ENCODE measurements at regions of chr7 and their contacts with region 1.

Region 1: DNA sequence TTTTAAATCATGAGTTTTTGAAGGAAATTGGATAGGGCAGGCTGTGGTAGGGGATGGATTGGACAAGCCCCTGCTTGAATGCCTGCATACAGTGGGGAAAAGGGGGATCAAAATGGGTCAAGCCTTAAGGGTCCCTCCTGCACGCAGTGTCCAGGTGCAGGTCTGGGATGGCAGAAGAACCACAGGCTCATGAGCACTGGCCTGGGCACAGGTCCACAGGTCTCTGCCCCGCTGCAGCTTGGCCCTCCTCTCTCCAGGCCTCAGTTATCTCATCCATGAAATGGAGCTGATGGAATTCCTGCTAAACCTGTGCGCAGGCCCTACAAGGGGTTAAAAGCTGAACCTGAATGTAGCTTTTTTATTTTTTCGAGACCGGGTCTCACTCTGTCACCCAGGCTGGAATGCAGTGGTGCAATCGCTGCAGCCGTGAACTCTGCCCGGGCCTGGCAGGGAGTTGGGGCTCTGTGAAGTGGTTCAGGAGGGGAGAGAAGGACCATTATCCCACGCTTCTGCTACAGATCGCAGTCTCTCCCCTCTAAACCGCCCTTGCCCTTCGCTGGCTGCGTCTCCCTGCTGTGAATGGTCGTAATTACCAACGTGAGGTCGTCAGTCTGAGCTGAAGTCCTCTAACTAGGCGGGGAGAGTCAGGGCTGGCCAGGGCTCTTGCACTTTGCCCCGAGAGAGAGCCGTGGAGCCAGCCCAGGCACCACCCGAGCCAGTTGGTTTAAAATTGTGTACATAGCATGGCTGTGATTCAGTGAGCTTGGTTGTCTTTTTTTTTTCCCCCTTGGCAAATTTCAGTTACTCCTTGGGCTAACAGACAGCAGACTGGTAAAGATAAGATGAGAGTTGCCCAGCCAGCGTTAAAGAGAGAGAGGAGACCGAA is 77.5 kb upstream of the GTF2I start:
- DNase-seq: peak; percentile 85
- H3K4me3 ChIP-seq: no peak overlapping the region
- H3K27ac ChIP-seq: peak overlapping the region; percentile 78 to 82 (median 78)
- H3K4me1 ChIP-seq: peaks cover 10 to 46% (median 27%) of the 10 kb centered on the region in 4 donors
- H3K27me3 ChIP-seq: no peaks in the 10 kb centered on the region
- CTCF ChIP-seq: no peak
- EP300 ChIP-seq: no peak
- POLR2A ChIP-seq: peak; percentile 55

Region 2: DNA sequence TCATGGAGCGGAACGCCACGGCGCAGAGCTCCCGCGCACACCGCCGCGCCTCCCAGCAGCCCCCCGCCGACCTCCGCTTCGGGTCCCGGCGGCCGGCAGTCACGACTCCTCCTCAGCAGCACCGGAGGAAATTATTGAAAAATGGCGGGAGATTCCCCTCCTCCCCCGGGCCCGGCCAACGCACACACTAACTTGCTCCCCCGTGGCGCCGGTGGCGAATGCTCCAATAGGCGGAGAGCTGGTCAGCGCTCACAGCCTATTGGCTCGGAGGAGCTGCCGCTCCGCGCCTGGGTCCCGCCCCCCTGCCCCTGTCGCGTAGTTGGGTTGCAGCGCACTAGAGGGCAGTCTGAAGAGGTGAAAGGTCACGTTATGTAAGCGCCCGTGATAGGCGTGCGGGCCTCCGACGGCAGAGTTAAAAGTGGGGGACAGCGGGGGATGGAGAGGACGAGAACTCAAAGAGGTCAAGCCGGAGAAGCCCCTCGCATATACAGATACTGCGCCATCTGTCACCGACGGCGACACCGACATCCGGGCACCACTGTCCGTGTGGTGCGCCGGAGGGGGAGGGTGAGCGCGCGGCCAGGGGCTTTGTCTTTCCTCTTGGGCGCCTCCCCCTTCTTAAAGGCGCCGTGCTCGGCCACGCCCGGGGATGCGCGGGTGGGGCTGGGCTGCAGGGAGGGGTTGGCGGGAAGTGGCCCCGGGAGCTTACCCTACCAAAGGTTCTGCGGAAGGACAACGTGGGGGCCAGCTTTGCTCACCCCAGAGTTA is 1057.8 kb before region 1 on chr7 and contains the start of gene BAZ1B:
- in situ Hi-C with region 1: no loop called
- intact Hi-C with region 1: loop called (anchors 5 kb)
- DNase-seq: peak; percentile 98
- H3K4me3 ChIP-seq: peak within 1 kb of the TSS; percentile 81 to 91 (median 87)
- H3K27ac ChIP-seq: peak within 1 kb of the TSS; percentile 91 to 97 (median 97)
- H3K4me1 ChIP-seq: peaks cover 10 to 51% (median 30%) of the 10 kb centered on the region in 4 donors
- H3K27me3 ChIP-seq: no peaks in the 10 kb centered on the region
- CTCF ChIP-seq: peak in 4 of 5 experiments; percentile 17 to 56 (median 30)
- EP300 ChIP-seq: no peak
- POLR2A ChIP-seq: peak; percentile 60
- total RNA-seq, gene BAZ1B: 28.7 to 48.0 (median 33.7) TPM

Region 3: GRCh38 chr7:73960548-73960947 is 619.5 kb before region 1 on chr7:
- in situ Hi-C with region 1: no loop called
- intact Hi-C with region 1: no loop called
- DNase-seq: peak; percentile 80
- H3K4me3 ChIP-seq: no peak overlapping the region
- H3K27ac ChIP-seq: no peak overlapping the region
- H3K4me1 ChIP-seq: no peaks in the 10 kb centered on the region
- H3K27me3 ChIP-seq: no peaks in the 10 kb centered on the region
- CTCF ChIP-seq: no peak
- EP300 ChIP-seq: no peak
- POLR2A ChIP-seq: no peak

Region 4: DNA sequence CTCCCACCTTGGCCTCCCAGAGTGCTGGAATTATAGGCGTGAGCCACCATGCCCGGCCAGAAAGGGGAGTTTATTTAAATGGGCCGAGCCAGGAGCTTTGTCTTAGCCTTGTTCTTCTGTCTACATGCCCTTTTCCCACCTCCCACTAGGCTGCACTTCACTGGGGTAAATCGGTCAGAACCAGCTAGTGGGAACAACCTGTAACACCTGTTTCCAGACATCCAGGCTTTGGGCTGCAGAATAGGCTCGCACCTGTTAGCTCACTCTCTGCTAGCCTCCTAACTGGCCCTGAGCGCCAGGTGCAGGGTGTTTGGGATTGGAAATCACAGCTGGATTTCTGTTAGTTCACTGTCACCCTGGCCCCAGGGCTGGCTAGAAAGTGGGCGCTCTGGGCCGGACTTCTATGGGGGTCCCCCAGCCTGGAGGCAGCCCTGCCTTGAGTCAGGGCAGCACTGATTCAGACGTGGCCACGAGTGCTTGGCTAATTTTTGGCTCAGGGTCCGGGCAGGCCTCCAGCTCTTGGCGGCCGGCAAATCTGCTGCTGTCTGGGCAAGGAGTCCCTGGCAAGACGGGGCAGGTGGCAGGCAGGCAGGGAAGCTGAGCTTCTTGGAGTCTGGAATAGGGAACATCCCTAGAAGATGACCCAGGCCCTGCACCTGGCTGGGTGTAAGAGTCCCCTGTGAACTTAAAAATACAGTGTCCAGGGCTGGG is 77.7 kb before region 1 on chr7:
- in situ Hi-C with region 1: no loop called
- intact Hi-C with region 1: loop called (anchors 2 kb)
- DNase-seq: peak; percentile 32
- H3K4me3 ChIP-seq: no peak overlapping the region
- H3K27ac ChIP-seq: peak overlapping the region; percentile 25 to 55 (median 52)
- H3K4me1 ChIP-seq: peaks cover 0 to 11% (median 4%) of the 10 kb centered on the region in 4 donors
- H3K27me3 ChIP-seq: no peaks in the 10 kb centered on the region
- CTCF ChIP-seq: no peak
- EP300 ChIP-seq: no peak
- POLR2A ChIP-seq: no peak